ENCODE measurements at regions of chr3 and their contacts with region 1.

Region 1: DNA sequence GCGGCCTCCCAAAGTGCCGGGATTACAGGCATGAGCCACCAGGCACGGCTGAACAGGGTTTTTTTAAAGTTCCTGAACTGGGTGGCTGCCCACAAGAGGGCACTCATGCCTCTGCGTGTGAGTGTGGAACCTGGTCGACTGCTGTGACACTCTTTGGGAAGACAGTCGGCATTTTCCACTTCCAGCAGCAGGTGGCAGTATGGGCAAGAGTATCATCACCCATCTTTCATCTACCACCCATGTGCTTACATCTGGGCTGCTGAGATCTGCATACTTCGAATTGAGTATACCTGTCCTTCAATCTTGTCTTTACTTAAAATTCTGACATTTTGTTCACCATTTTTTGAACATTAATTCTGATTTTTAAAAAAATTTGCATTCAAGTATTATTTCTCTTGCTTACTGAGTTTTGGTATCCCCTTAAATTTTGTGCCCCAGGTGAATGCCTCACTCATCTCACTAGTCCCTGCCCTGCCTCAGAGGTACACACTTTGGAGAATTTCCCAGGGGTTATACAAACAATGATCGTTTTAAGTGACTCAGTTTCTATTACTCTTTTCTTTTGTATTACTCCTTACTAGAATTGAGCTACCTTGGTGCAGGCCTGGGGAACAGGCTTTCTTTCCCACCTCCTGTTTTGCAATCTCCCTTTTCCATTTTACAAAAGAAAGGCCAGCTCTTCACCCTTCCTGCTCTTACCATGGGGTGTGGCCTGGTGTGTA is 11.8 kb downstream of the CLEC3B start:
- DNase-seq: peak; percentile 94

Region 2: DNA sequence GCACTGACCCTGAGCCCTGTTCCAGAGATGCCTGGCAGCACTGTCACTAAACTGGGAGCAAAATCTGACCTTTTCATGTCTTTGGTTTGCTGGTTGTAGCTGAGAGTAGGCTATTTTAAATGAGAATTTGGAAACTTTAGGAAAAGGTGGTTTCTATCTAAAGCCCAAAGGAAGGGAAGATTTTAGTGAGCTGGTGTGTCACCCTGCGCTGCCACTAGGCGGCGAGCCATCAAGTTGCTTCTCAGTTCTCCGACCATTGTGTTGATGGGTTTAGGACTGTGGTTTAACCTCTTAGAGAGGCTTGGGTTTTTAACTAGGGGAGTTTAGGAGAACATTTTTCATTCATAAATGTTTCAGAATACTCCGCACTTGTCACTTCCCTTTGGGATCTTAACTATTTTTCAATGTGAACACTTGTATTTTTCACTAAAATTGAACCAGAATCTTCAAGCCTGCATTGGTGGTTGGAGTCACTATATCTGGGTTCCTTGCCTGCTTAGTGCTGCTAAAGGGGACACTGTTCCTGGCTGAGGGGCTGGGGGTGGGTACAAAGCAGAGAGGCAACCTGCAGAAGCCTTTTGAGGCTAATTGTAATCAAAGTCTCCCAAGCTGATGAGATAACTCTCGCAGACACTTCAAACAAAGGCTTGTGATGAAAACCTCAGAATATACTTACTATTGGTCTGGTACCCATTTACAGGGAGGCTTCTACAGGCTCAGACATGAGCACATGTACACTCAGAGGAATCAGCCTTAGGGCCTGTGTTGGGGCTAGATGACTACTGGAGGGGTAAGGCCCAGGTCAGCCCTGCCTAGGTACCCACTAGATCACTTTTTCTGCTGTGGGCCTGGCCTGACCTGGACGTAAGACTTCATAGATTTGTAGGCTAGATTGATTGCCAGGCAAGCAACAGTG is 45.1 kb before region 1 on chr3:
- intact Hi-C with region 1: loop called (anchors 5 kb)
- DNase-seq: no peak

Region 3: DNA sequence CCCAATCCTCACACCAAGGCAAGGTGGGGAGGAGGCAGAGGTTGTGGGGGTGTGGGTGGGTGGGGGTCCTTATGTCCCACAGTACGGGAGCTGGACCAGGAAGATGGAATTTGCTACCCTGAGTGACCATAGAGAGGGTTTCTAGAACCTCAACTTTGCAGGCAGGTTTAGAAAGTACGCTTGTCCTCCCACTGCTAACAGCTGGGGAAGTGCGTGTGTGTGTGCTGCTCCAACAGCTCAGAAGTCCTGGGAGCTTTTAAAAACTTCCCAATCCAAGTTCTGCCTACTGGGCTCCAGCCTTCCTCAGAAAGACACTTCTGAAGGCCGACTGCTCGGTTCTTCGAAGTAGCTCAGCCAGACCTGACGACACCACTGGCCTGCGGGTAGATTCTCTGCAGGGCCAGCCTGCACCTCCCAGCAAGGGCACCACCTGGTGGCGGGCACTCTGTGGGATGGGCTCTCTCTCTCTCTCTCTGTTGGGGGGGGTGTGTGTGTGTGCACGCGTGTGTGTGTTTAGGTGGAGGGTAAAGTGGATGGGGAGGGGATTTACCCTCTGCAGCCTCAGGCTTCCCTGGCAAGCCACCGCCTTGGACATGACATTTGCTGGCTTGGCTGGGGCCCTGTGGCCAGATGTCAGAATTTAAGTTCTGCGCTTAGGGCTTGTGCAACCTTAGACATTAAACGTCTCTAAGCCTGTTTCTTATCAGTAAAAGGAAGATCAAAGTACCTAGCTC is 172.6 kb after region 1 on chr3:
- intact Hi-C with region 1: loop called (anchors 1 kb)
- DNase-seq: peak; percentile 90

Region 4: GRCh38 chr3:45499529-45499928 is 461.6 kb after region 1 on chr3:
- intact Hi-C with region 1: loop called (anchors 2 kb)
- DNase-seq: no peak